Naive thymus-derived CD8-positive, alpha-beta T cell (primary cell): ENCODE measurements at regions of chr1 and their contacts with region 1.

Region 1: DNA sequence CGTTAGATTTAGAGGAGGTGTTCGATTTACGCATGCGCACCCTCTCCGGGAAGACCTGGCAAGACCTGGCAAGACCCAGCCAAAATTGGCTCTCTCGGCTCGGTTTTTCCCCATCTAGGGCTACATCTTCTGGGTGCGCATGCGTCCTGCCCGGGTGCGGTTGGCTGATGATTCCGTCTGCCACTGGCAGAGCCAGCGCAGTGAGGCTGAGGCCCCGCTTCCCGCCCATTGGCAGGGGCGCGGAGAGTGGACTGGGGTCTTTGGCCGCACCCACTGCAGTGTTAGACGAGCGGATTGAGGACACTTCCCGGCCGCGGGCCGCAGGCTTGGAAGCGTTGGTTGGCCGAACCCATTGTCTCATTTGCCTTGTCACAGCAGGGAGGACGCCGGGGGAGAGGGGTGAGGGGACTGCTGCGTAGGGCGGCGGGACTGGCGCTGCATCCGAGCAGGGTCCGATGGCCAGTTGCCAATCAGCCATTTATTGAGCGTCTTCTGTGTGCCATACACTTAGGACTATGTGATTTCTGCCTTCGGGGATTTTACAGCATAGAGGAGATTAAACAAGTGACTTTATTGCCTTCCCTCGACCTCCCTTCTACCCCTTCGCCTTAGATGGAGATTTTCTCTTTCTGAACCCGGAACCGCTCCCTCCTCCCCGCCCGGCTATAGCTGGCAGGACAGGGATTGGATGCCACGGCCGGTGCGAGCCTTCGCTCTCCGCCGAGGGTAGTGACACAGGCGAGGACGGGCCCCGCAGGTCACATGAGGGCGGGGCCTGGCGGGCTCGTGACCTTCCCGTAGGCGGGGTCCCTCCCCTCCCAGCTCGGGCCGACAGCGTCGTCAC is 43.7 kb downstream of the MEF2D start:
- DNase-seq: peak; percentile 94 to 99 (median 96)
- ATAC-seq: peak; percentile 79 to 83
- H3K4me3 Mint-ChIP-seq: peak overlapping the region; percentile 89 to 97 (median 95)
- H3K27ac Mint-ChIP-seq: peak overlapping the region; percentile 94 to 100 (median 100)
- H3K4me1 Mint-ChIP-seq: peaks cover 16 to 18% (median 17%) of the 10 kb centered on the region in 4 donors
- H3K27me3 Mint-ChIP-seq: no peaks in the 10 kb centered on the region

Region 2: GRCh38 chr1:156421062-156421938 is 35.5 kb before region 1 on chr1:
- POLR2A ChIA-PET with region 1: no interaction called
- DNase-seq: peak; percentile 34 to 74 (median 52)
- ATAC-seq: peak; percentile 68 to 69
- H3K4me3 Mint-ChIP-seq: peak overlapping the region; percentile 84 to 97 (median 90)
- H3K27ac Mint-ChIP-seq: peak overlapping the region in 3 of 10 donors; percentile 28 to 80 (median 48)
- H3K4me1 Mint-ChIP-seq: peaks cover 12 to 29% (median 24%) of the 10 kb centered on the region in 4 donors
- H3K27me3 Mint-ChIP-seq: peaks cover 41 to 92% (median 72%) of the 10 kb centered on the region in 5 donors

Region 3: GRCh38 chr1:156471496-156472490 is 14.9 kb after region 1 on chr1:
- POLR2A ChIA-PET with region 1: interaction called, 18 read pairs
- DNase-seq: peak in 1 of 10 donors; percentile 56
- ATAC-seq: no peak
- H3K4me3 Mint-ChIP-seq: no peak overlapping the region
- H3K27ac Mint-ChIP-seq: peak overlapping the region in 4 of 10 donors; percentile 15 to 56 (median 26)
- H3K4me1 Mint-ChIP-seq: peaks cover 4 to 23% (median 8%) of the 10 kb centered on the region in 4 donors
- H3K27me3 Mint-ChIP-seq: no peaks in the 10 kb centered on the region

Region 4: GRCh38 chr1:156480411-156481192 is 23.8 kb after region 1 on chr1:
- POLR2A ChIA-PET with region 1: interaction called, 11 read pairs
- DNase-seq: peak; percentile 66 to 91 (median 80)
- ATAC-seq: peak; percentile 86 to 93
- H3K4me3 Mint-ChIP-seq: peak overlapping the region; percentile 0 to 67 (median 52)
- H3K27ac Mint-ChIP-seq: peak overlapping the region; percentile 84 to 99 (median 94)
- H3K4me1 Mint-ChIP-seq: peaks cover 24 to 55% (median 55%) of the 10 kb centered on the region in 4 donors
- H3K27me3 Mint-ChIP-seq: no peaks in the 10 kb centered on the region

Region 5: DNA sequence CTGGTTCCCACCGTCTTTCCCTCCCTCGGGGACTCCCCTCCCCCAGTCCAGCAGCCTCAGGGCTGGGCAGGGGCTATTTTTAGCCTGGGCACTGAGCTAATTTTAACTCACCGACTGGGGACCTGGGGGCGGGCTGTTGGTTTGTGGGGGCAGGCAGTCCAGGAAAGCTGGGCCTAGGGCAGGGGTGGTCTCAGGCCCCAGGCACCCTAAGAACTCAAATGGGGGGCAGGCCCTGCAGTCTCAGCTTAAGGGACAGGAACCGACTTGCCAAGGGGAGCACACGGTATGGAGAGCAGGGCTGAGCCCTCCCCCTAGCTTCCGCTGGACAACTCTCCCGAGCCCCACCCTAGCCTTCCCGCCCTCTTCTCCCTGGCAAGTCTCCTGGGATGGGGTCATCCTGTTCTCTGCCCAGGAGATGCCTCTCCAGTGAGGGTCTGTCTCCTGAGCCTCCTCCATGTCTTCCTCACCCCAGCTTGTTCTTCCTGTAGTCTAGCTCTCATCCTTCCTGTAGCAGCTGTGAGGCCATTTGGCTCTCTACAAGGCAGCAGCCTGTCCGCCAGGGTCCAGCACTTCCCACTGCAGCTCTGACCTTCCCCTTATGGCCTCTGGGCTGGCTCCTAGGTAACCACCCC is 33.7 kb after region 1 on chr1:
- POLR2A ChIA-PET with region 1: interaction called, 11 read pairs
- DNase-seq: no peak
- ATAC-seq: no peak
- H3K4me3 Mint-ChIP-seq: peak overlapping the region; percentile 59 to 86 (median 78)
- H3K27ac Mint-ChIP-seq: peak overlapping the region; percentile 87 to 99 (median 94)
- H3K4me1 Mint-ChIP-seq: peaks cover 66 to 99% (median 97%) of the 10 kb centered on the region in 4 donors
- H3K27me3 Mint-ChIP-seq: no peaks in the 10 kb centered on the region